RWPE1 (cell line): ENCODE measurements at regions of chr14 and their contacts with region 1.

Region 1: GRCh38 chr14:65015391-65015790 is 28.7 kb downstream of the FNTB start:
- DNase-seq: no peak
- H3K27ac ChIP-seq: no peak overlapping the region
- CTCF ChIP-seq: no peak

Region 2: GRCh38 chr14:65042731-65043372 is 27.5 kb after region 1 on chr14:
- CTCF ChIA-PET with region 1: no interaction called
- POLR2A ChIA-PET with region 1: no interaction called
- DNase-seq: no peak
- H3K27ac ChIP-seq: no peak overlapping the region
- CTCF ChIP-seq: no peak

Region 3: GRCh38 chr14:65496178-65496993 is 481.0 kb after region 1 on chr14:
- CTCF ChIA-PET with region 1: interaction called, 10 read pairs
- POLR2A ChIA-PET with region 1: no interaction called
- DNase-seq: no peak
- H3K27ac ChIP-seq: no peak overlapping the region
- CTCF ChIP-seq: no peak